ENCODE measurements at regions of chr2 and their contacts with region 1.

Region 1: GRCh38 chr2:48332286-48332685 is 197.7 kb upstream of the STON1 start:
- DNase-seq: no peak
- ATAC-seq: peak; percentile 82
- H3K4me3 ChIP-seq: no peak overlapping the region
- H3K27ac ChIP-seq: no peak overlapping the region; the same call in 1 of the 2 replicates
- H3K4me1 ChIP-seq: peaks cover 12% of the 10 kb centered on the region
- H3K27me3 ChIP-seq: no peaks in the 10 kb centered on the region
- CTCF ChIP-seq: no peak
- EP300 ChIP-seq: peak in 1 of 2 experiments; percentile 60; a peak in 1 of 4 replicates
- POLR2A ChIP-seq: no peak
- RAD21 ChIP-seq: no peak

Region 2: DNA sequence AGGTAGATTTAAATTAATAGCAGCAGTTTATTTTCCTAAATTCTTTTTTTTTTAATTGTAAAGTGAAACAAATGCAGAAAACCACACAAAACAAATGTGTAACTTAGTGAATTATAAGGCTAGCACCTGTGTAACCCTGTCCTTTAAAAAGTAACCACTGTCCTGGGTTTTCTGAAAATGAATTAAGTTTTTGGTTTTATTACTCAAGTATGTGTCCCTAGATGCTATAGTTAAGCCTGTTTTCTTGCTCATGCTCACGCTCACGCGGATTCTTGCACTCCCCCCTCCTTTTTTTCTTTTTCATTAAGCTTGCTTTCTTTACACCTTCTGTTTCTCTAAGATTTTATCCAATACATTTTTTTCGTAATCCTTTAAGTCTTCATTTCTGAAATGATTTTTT is 10.0 kb before region 1 on chr2:
- CTCF ChIA-PET with region 1: interaction called, 11 read pairs
- POLR2A ChIA-PET with region 1: interaction called, 5 read pairs
- RAD21 ChIA-PET with region 1: interaction called, 10 read pairs
- SMC1A ChIA-PET with region 1: interaction called, 23 read pairs
- in situ Hi-C with region 1: no loop called
- intact Hi-C with region 1: no loop called
- DNase-seq: no peak
- ATAC-seq: no peak
- H3K4me3 ChIP-seq: no peak overlapping the region
- H3K27ac ChIP-seq: no peak overlapping the region; the same call in 1 of the 2 replicates
- H3K4me1 ChIP-seq: peaks cover 7% of the 10 kb centered on the region
- H3K27me3 ChIP-seq: no peaks in the 10 kb centered on the region
- CTCF ChIP-seq: no peak
- EP300 ChIP-seq: no peak
- POLR2A ChIP-seq: no peak
- RAD21 ChIP-seq: no peak

Measured in GM12878 (cell line).